ENCODE measurements at regions of chr12 and their contacts with region 1.

Region 1: GRCh38 chr12:92363295-92364146 is 217.9 kb upstream of the BTG1 start:
- DNase-seq: peak; percentile 96
- ATAC-seq: peak; percentile 82
- H3K4me3 ChIP-seq: peak overlapping the region; percentile 62
- H3K27ac ChIP-seq: peak overlapping the region; percentile 99
- H3K4me1 ChIP-seq: peaks cover 17% of the 10 kb centered on the region; the same call in 1 of the 2 replicates
- H3K27me3 ChIP-seq: no peaks in the 10 kb centered on the region
- CTCF ChIP-seq: no peak
- EP300 ChIP-seq: peak; percentile 60 to 79; a peak in 3 of 4 replicates
- POLR2A ChIP-seq: peak; percentile 83
- RAD21 ChIP-seq: peak; percentile 12; the same call in 1 of the 2 replicates

Region 2: GRCh38 chr12:92185052-92185451 is 178.5 kb before region 1 on chr12:
- CTCF ChIA-PET with region 1: no interaction called
- POLR2A ChIA-PET with region 1: no interaction called
- RAD21 ChIA-PET with region 1: interaction called, 5 read pairs
- SMC1A ChIA-PET with region 1: interaction called, 6 read pairs
- in situ Hi-C with region 1: no loop called
- intact Hi-C with region 1: loop called (anchors 5 kb)
- DNase-seq: peak; percentile 80
- ATAC-seq: peak; percentile 81
- H3K4me3 ChIP-seq: no peak overlapping the region
- H3K27ac ChIP-seq: peak overlapping the region; percentile 77
- H3K4me1 ChIP-seq: peaks cover 28% of the 10 kb centered on the region
- H3K27me3 ChIP-seq: no peaks in the 10 kb centered on the region
- CTCF ChIP-seq: no peak
- EP300 ChIP-seq: peak; percentile 14 to 61; a peak in 1 of 4 replicates
- POLR2A ChIP-seq: no peak
- RAD21 ChIP-seq: peak; percentile 13; the same call in 1 of the 2 replicates

Region 3: DNA sequence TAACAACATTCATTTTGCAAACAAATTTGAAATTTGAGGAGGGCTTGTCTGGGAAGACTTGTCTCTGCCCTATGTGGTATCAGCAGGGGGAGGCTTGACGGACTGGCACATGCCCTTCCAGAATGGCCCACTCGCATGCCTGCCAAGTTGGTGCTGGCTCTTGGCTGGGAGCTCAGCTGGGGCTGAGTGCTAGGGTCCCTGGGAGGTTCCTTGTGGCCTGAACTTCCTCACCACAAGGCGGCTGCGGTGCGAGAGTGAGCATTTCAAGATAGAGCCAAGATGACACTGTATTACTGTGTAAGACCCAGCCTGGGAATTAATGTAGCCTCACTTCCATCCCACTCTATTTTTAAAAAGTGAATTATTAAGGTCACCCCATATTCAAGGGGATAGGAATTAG is 67.6 kb after region 1 on chr12:
- CTCF ChIA-PET with region 1: interaction called, 4 read pairs
- POLR2A ChIA-PET with region 1: interaction called, 10 read pairs
- RAD21 ChIA-PET with region 1: interaction called, 4 read pairs
- SMC1A ChIA-PET with region 1: interaction called, 19 read pairs
- in situ Hi-C with region 1: no loop called
- intact Hi-C with region 1: loop called (anchors 1 kb)
- DNase-seq: no peak
- ATAC-seq: peak; percentile 64
- H3K4me3 ChIP-seq: no peak overlapping the region
- H3K27ac ChIP-seq: peak overlapping the region; percentile 10
- H3K4me1 ChIP-seq: peaks cover 46% of the 10 kb centered on the region
- H3K27me3 ChIP-seq: no peaks in the 10 kb centered on the region
- CTCF ChIP-seq: peak; percentile 6 to 42 (median 40); a peak in 3 of 6 replicates
- EP300 ChIP-seq: no peak
- POLR2A ChIP-seq: no peak
- RAD21 ChIP-seq: peak; percentile 61

Region 4: DNA sequence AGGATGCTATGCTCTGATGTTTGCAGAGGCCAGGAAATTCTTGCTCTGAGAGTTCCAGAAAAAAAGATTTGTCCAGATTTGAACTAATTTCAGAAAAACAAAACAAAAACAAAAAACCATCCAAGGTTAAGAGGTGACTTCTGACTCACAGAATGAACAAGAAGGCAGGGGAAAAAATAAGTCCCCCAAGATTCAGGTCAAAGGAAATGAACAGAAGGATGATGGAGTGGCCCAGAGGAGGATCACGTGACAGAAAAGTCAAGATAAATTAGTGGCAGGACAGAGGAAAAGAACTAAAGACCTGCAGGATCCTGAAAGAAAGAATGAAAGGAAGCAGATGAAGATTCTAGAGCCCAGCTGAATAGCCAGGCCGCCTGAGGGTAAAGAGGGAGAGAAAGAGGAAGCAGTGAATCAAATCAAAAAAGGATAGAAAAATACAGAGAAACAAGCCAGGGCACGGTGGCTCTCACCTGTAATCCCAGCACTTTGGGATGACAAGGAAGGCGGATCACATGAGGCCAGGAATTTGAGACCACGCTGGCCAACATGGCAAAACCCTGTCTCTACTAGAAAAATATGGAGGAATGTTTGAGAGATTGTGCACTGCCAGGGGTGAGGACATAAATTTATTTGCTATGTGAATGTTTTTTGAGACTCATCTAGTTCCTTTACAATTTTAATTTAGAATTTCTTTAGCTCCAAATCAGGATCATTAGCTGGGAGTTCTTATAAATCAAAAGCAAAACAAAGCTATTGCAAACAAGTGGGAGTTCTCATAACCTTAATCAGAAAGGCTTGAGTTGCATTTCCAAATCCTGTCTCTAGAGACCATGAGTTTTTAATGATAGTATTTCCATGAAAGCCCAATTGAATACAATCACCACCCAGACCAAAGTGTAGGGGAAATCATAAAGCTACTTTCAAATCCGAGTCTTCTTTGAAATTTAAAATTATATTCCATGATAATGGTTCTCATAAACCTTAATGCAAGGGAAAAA is 122.1 kb after region 1 on chr12:
- CTCF ChIA-PET with region 1: interaction called, 10 read pairs
- POLR2A ChIA-PET with region 1: interaction called, 6 read pairs
- RAD21 ChIA-PET with region 1: interaction called, 8 read pairs
- SMC1A ChIA-PET with region 1: interaction called, 5 read pairs
- in situ Hi-C with region 1: no loop called
- intact Hi-C with region 1: no loop called
- DNase-seq: no peak
- ATAC-seq: peak; percentile 58
- H3K4me3 ChIP-seq: no peak overlapping the region
- H3K27ac ChIP-seq: peak overlapping the region; percentile 90
- H3K4me1 ChIP-seq: peaks cover 53% of the 10 kb centered on the region
- H3K27me3 ChIP-seq: no peaks in the 10 kb centered on the region
- CTCF ChIP-seq: no peak
- EP300 ChIP-seq: no peak
- POLR2A ChIP-seq: no peak
- RAD21 ChIP-seq: no peak

Region 5: DNA sequence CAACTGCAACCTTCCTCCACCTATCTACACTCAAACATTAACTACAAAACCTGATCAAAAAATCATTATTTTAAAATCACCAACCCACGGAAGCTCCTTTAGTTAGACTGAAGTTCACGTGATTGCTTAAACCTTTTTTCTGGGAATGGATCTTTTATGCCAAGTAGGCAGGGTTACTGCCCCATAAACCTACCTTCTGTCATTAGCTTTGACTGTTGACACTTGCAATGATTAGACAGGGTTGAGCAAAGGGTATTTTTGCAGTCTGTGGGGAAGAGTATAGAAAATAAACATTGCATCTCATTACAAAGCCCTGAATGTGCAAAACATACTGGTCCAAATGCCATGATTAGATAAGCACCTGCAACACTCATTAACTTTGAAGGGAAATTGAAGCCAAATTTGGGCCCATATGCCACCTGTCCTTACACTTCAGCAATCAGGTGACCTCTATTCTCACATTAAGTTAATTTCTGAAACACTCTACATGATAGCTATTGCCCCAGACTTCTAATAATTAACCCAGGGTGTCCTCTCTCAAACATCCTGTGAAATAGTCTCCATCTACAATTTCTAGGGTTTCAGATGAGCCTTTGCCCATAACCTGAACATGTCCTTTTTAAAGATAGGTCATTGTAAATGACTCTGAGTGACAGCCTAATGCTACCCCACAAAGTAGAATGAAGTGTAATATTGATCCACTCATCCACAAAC is 183.3 kb after region 1 on chr12:
- CTCF ChIA-PET with region 1: interaction called, 4 read pairs
- POLR2A ChIA-PET with region 1: interaction called, 4 read pairs
- RAD21 ChIA-PET with region 1: interaction called, 17 read pairs
- SMC1A ChIA-PET with region 1: interaction called, 6 read pairs
- in situ Hi-C with region 1: no loop called
- intact Hi-C with region 1: loop called (anchors 2 kb)
- DNase-seq: no peak
- ATAC-seq: peak; percentile 60
- H3K4me3 ChIP-seq: no peak overlapping the region
- H3K27ac ChIP-seq: no peak overlapping the region
- H3K4me1 ChIP-seq: peaks cover 43% of the 10 kb centered on the region
- H3K27me3 ChIP-seq: no peaks in the 10 kb centered on the region
- CTCF ChIP-seq: no peak
- EP300 ChIP-seq: peak in 1 of 2 experiments; percentile 52; a peak in 2 of 4 replicates
- POLR2A ChIP-seq: no peak
- RAD21 ChIP-seq: no peak

Measured in GM12878 (cell line).